PC-3 (cell line): ENCODE measurements at regions of chr1 and their contacts with region 1.

Region 1: GRCh38 chr1:234326497-234327366 is 46.5 kb upstream of the COA6 start:
- DNase-seq: peak; percentile 81
- ATAC-seq: peak; percentile 94
- H3K4me3 ChIP-seq: peak overlapping the region; percentile 66
- H3K27ac ChIP-seq: no peak overlapping the region
- H3K4me1 ChIP-seq: no peaks in the 10 kb centered on the region
- H3K27me3 ChIP-seq: no peaks in the 10 kb centered on the region
- CTCF ChIP-seq: peak; percentile 96

Region 2: GRCh38 chr1:233972939-233973635 is 353.6 kb before region 1 on chr1:
- CTCF ChIA-PET with region 1: no interaction called
- POLR2A ChIA-PET with region 1: no interaction called
- intact Hi-C with region 1: no loop called
- DNase-seq: peak; percentile 91
- ATAC-seq: peak; percentile 75
- H3K4me3 ChIP-seq: no peak overlapping the region
- H3K27ac ChIP-seq: peak overlapping the region; percentile 92
- H3K4me1 ChIP-seq: peaks cover 23% of the 10 kb centered on the region
- H3K27me3 ChIP-seq: no peaks in the 10 kb centered on the region
- CTCF ChIP-seq: peak; percentile 35; the same call in 1 of the 2 replicates

Region 3: GRCh38 chr1:234114648-234115307 is 212.0 kb before region 1 on chr1:
- CTCF ChIA-PET with region 1: no interaction called
- POLR2A ChIA-PET with region 1: no interaction called
- intact Hi-C with region 1: loop called (anchors 5 kb)
- DNase-seq: peak; percentile 85
- ATAC-seq: peak; percentile 65
- H3K4me3 ChIP-seq: peak overlapping the region; percentile 60
- H3K27ac ChIP-seq: no peak overlapping the region
- H3K4me1 ChIP-seq: peaks cover 2% of the 10 kb centered on the region
- H3K27me3 ChIP-seq: no peaks in the 10 kb centered on the region
- CTCF ChIP-seq: peak; percentile 92

Region 4: GRCh38 chr1:234163267-234163919 is 163.3 kb before region 1 on chr1:
- CTCF ChIA-PET with region 1: no interaction called
- POLR2A ChIA-PET with region 1: no interaction called
- intact Hi-C with region 1: no loop called
- DNase-seq: peak; percentile 20
- ATAC-seq: peak; percentile 40; the same call in 1 of the 2 replicates
- H3K4me3 ChIP-seq: no peak overlapping the region
- H3K27ac ChIP-seq: no peak overlapping the region
- H3K4me1 ChIP-seq: no peaks in the 10 kb centered on the region
- H3K27me3 ChIP-seq: no peaks in the 10 kb centered on the region
- CTCF ChIP-seq: no peak

Region 5: GRCh38 chr1:234683861-234684632 is 357.3 kb after region 1 on chr1:
- CTCF ChIA-PET with region 1: no interaction called
- POLR2A ChIA-PET with region 1: no interaction called
- intact Hi-C with region 1: no loop called
- DNase-seq: peak; percentile 65
- ATAC-seq: peak; percentile 61; the same call in 1 of the 2 replicates
- H3K4me3 ChIP-seq: no peak overlapping the region
- H3K27ac ChIP-seq: no peak overlapping the region
- H3K4me1 ChIP-seq: peaks cover 4% of the 10 kb centered on the region; the same call in 1 of the 2 replicates
- H3K27me3 ChIP-seq: no peaks in the 10 kb centered on the region
- CTCF ChIP-seq: no peak